A673 (cell line): ENCODE measurements at regions of chr3 and their contacts with region 1.

Region 1: GRCh38 chr3:64030741-64031140 is 7.4 kb upstream of the PSMD6 start:
- DNase-seq: peak; percentile 66
- H3K4me3 ChIP-seq: no peak overlapping the region
- H3K27ac ChIP-seq: no peak overlapping the region
- H3K4me1 ChIP-seq: no peaks in the 10 kb centered on the region
- H3K27me3 ChIP-seq: peaks cover 5% of the 10 kb centered on the region
- CTCF ChIP-seq: peak; percentile 65

Region 2: GRCh38 chr3:64166584-64167162 is 135.9 kb after region 1 on chr3:
- CTCF ChIA-PET with region 1: no interaction called
- POLR2A ChIA-PET with region 1: no interaction called
- intact Hi-C with region 1: loop called (anchors 5 kb)
- DNase-seq: peak; percentile 45
- H3K4me3 ChIP-seq: no peak overlapping the region
- H3K27ac ChIP-seq: no peak overlapping the region
- H3K4me1 ChIP-seq: no peaks in the 10 kb centered on the region
- H3K27me3 ChIP-seq: no peaks in the 10 kb centered on the region
- CTCF ChIP-seq: peak; percentile 42; the same call in 1 of the 2 replicates

Region 3: DNA sequence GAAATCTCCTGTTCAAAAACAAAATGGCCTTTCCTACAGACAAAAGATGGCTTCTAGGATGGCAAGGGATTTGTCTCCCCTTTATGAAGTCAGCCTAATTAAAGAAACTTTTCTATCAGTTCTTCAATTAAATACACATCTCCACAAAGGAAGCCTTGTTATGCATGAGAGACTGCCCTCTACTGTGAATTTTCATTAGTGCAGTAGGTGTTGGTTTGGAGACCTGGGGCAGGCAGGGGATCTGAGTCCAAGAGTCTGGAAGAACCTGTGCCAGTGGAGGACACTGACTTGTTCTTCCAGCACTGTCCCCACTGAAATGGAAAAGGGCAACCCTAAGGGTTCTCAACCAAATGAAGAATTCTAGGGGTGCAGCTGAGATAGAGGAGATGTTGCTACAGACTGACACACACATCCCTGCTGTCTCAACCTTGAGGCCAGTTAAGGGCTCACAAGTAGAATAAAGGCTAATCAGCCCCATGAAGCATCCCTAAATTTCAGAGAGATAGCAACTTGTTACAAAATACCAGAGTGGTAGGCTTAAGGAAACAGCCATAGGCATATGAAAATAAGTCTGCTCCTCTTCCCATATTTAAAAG is 368.6 kb after region 1 on chr3:
- CTCF ChIA-PET with region 1: no interaction called
- POLR2A ChIA-PET with region 1: no interaction called
- intact Hi-C with region 1: loop called (anchors 2 kb)
- DNase-seq: peak; percentile 49
- H3K4me3 ChIP-seq: no peak overlapping the region
- H3K27ac ChIP-seq: no peak overlapping the region
- H3K4me1 ChIP-seq: no peaks in the 10 kb centered on the region
- H3K27me3 ChIP-seq: no peaks in the 10 kb centered on the region
- CTCF ChIP-seq: peak; percentile 51

Region 4: DNA sequence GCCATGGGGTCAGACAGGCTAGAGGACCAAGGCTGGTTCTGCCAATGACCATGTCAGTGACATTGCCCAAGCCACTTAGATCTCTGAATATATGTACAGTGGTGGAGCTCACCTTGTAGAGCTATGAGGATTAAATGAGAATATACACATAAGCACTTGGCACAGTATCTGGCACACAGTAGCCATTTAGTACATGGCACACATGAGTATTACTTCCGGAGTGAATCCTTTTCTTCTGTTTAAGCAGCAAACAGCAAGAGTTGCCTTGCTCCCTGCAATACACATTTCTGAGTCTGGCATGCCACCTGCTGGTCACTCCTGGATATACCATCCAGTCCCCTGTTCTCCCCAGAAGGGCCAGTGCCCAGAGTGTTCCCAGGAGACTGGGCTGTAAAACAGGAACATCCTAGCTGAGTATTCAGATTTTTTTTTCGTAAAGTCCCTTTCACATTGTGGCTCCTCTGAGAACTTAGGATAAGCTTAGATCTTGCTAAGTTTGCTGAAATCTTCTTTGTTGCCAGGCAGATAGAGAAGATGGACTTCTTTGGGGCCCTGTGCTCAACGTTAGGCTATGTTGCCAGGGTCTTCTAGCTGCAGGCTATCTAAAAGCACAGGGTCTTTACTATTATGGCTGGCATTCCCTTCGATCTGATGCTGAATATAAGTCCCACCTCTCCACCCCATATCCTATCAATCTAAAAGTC is 453.7 kb after region 1 on chr3:
- CTCF ChIA-PET with region 1: no interaction called
- POLR2A ChIA-PET with region 1: no interaction called
- intact Hi-C with region 1: loop called (anchors 2 kb)
- DNase-seq: peak; percentile 68
- H3K4me3 ChIP-seq: no peak overlapping the region
- H3K27ac ChIP-seq: no peak overlapping the region
- H3K4me1 ChIP-seq: no peaks in the 10 kb centered on the region
- H3K27me3 ChIP-seq: no peaks in the 10 kb centered on the region
- CTCF ChIP-seq: peak; percentile 66